AG04450 (cell line): ENCODE measurements at regions of chr1 and their contacts with region 1.

Region 1: DNA sequence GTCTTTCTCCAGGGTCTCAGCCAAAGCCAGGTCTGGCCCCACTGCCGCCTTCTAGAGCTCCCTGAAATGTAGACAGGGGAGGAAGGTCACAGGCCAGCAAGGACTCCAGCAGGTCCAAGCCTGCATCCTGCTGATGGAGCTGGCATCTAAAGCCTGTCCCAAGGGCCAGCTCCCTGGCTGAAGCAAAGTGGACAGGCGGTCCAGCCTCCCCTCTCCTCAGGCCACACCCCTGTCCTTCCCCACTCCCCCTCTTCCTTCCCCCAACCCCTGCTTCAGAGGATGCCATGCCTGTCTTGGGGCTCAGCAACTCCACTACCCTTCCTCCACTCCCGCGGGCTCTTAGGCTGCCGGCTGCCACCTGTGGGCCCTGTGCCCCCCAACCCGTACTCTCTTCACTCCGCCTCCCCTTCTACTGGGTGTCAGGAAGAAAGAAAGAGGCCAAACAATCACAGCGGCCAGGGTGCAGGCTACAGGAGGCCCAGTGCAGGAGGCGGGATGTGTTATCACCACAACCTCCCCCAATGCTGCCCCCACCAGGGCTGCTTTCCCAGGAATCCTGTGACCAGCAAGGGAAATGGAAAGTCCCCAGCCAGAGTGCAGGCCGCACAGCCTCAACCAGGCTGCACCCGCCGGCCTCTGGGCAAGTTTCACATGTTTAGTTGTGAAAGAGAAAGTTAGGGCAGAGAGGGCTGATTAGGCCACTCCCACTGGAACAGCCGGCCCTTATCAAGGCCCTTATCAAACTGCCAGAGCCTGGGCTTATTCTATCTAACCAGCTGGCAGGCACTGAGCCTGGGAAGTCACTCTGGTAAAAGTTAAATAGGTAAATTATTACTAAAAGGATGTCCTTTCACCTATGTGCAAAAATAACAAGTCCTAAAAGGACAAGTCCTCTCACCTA is 34.1 kb downstream of the ACOT7 start:
- DNase-seq: peak; percentile 47
- H3K4me3 ChIP-seq: peak overlapping the region; percentile 7
- H3K27ac ChIP-seq: peak overlapping the region; percentile 89
- H3K27me3 ChIP-seq: no peaks in the 10 kb centered on the region
- CTCF ChIP-seq: no peak

Region 2: DNA sequence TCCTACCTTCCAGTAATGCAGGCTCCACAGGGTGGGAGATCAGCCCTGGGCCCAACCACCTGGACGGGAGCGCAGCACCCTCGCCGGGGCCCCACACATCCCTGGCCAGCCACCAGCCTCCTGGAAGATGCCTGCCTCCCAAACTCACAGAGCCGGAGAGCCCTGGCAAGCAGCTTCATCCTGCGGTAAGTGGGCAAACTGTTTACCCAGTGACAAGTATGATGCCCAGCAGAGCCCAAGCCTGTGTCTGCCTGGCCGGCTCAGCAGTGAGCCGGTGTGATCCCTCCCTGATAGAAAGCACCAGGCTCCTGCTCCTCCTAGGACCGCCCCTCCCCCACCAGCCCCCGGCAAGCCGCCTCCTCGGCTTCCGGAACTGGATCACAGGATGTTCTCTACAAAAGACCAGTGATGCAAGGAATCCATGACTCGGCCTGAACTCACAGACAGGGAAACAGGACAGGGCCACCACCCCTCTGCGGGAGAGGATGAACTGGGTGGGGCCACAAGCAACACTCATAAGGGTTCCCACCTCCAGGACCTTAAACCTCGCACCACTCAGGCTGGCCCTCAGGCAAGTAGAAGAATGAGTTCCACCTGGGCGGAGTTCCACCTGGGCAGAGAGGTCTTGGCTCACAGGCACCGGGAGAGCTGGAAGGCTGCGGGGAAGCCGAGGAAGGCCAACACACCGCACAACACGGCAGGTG is 26.2 kb after region 1 on chr1:
- CTCF ChIA-PET with region 1: interaction called, 41 read pairs
- POLR2A ChIA-PET with region 1: no interaction called
- DNase-seq: no peak
- H3K4me3 ChIP-seq: peak overlapping the region; percentile 47
- H3K27ac ChIP-seq: peak overlapping the region; percentile 61
- H3K27me3 ChIP-seq: no peaks in the 10 kb centered on the region
- CTCF ChIP-seq: no peak

Region 3: GRCh38 chr1:6401673-6402072 is 42.2 kb after region 1 on chr1:
- CTCF ChIA-PET with region 1: interaction called, 79 read pairs
- POLR2A ChIA-PET with region 1: interaction called, 5 read pairs
- DNase-seq: no peak
- H3K4me3 ChIP-seq: no peak overlapping the region
- H3K27ac ChIP-seq: no peak overlapping the region
- H3K27me3 ChIP-seq: peaks cover 3% of the 10 kb centered on the region
- CTCF ChIP-seq: no peak